ENCODE measurements at regions of chr17 and their contacts with region 1.

Region 1: DNA sequence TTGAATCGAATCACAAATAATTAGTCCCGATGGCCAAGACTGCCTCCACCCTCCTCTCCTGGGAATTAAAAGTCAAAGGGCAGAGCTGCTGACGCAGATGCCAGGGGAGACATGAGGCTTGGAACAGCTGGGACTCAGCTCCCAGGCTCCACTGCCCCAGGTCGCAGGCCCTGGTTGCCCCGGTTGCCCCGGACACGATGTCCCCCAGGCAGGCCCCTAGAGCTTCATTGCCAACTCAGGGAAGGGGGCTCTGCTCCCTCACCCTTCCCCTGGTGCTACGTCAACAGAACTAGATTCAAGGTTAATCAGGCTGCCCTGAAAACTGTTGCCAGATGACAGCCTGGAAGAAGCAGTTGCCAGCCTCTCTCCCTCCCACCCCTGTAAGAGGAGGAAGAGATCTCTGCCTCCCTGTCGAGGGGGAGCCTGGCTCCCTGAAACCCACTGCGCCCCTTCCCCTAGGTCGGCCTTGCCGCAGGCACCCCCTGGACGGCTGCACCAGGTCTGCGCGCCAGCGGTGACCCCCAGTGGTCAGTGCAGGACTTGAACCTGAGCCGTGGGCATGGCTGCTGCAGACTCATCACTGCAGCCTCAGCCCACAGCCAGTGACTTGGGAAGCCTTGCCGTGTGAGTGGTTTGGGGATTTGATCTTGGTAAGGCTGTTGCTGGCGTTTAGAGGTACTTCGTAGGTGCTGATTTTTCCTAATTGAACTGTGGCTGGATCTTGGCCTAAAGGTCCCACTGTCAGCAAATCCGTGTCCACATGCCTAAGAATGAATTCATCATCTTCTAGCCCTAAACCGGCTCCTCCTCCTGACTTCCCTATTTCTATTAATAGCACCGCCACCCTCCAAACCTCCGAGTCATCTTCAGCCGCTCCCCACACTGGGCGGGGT is 84.1 kb upstream of the TOB1 start:
- DNase-seq: peak; percentile 81 to 90
- H3K4me3 ChIP-seq: peak overlapping the region in 2 of 4 donors; percentile 3 to 15
- H3K27ac ChIP-seq: peak overlapping the region; percentile 83 to 92 (median 86)
- H3K4me1 ChIP-seq: peaks cover 35 to 71% (median 62%) of the 10 kb centered on the region in 4 donors
- H3K27me3 ChIP-seq: no peaks in the 10 kb centered on the region
- CTCF ChIP-seq: peak in 5 of 7 experiments; percentile 58 to 92 (median 79)
- EP300 ChIP-seq: peak; percentile 87
- POLR2A ChIP-seq: no peak

Region 2: DNA sequence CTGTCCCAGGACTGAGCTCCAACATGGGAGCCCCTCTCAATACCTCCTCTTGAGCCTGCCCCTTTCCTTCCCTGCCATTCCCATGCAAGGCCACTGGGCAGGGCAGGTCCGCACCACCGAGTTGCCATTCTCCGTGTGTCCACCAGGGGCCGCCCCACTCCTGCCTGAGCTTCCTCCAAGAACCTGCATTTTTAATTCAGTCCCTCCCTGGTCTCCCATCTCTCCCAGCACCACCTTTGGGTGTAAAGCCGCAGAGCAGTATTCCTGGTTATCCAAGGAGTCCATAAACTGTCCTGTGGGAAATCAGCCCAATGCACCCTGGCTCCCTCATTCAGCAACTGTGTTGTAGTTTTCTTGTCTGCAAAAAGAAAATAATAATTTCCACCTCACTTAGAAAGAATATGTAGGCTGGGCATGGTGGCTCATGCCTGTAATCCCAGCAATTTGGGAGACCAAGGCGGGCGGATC is 167.0 kb before region 1 on chr17:
- intact Hi-C with region 1: loop called (anchors 10 kb)
- DNase-seq: peak; percentile 90 to 95
- H3K4me3 ChIP-seq: no peak overlapping the region
- H3K27ac ChIP-seq: no peak overlapping the region
- H3K4me1 ChIP-seq: peaks cover 8 to 31% (median 17%) of the 10 kb centered on the region in 4 donors
- H3K27me3 ChIP-seq: no peaks in the 10 kb centered on the region
- CTCF ChIP-seq: peak in 6 of 7 experiments; percentile 47 to 99 (median 99)
- EP300 ChIP-seq: no peak
- POLR2A ChIP-seq: no peak

Region 3: DNA sequence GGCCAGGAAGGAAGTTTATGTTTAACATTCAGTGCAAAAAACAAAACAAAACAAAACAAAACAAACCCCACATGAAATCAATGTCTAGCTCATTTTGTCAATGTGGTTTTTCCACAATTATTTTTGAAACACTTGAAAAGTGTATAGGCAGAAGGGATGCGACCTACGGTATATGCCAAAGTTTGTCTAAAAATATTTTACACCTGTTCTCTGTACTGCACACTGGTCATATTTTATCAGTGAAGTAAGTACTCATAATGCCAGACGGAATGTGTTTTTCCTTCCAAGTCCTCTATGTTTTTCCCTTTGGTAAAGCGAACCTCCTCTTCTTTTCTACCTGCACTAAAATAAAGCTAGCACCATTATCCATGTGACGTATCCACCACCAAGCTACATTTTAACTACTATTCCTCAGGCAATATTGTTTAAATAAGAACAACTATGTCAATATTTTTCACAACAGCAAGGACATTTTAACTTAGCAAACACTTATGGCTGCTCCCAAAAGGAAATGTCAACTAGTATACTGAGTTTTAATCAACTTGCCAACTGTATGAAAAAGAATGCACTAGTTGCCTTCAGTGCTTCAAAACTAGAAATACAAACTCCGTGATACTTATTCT is 94.4 kb before region 1 on chr17:
- intact Hi-C with region 1: no loop called
- DNase-seq: peak in 1 of 2 donors; percentile 28
- H3K4me3 ChIP-seq: no peak overlapping the region
- H3K27ac ChIP-seq: peak overlapping the region in 4 of 5 donors; percentile 39 to 78 (median 62)
- H3K4me1 ChIP-seq: peaks cover 8 to 61% (median 41%) of the 10 kb centered on the region in 4 donors
- H3K27me3 ChIP-seq: no peaks in the 10 kb centered on the region
- CTCF ChIP-seq: no peak
- EP300 ChIP-seq: no peak
- POLR2A ChIP-seq: no peak